CD4-positive, alpha-beta memory T cell (primary cell): ENCODE measurements at regions of chr11 and their contacts with region 1.

Region 1: GRCh38 chr11:93741094-93741881 is at the starts of genes C11orf54 and TAF1D:
- DNase-seq: peak; percentile 96 to 98 (median 97)
- H3K4me3 ChIP-seq: peak within 1 kb of the TSS; percentile 85 to 98
- H3K4me3 Mint-ChIP-seq: peak within 1 kb of the TSS; percentile 98 to 100 (median 100)
- H3K27ac ChIP-seq: peak within 1 kb of the TSS; percentile 93
- H3K27ac Mint-ChIP-seq: peak within 1 kb of the TSS; percentile 98 to 100 (median 99)
- H3K4me1 ChIP-seq: peaks cover 51% of the 10 kb centered on the region
- H3K4me1 Mint-ChIP-seq: peaks cover 41 to 77% (median 57%) of the 10 kb centered on the region in 4 donors
- H3K27me3 ChIP-seq: no peaks in the 10 kb centered on the region
- H3K27me3 Mint-ChIP-seq: no peaks in the 10 kb centered on the region
- total RNA-seq, gene C11orf54: 31.2 to 36.4 TPM
- total RNA-seq, gene TAF1D: 198 to 199 TPM

Region 2: GRCh38 chr11:93543292-93543977 is 197.9 kb before region 1 on chr11 and contains the start of gene SMCO4:
- CTCF ChIA-PET with region 1: no interaction called
- POLR2A ChIA-PET with region 1: no interaction called
- intact Hi-C with region 1: loop called (anchors 5 kb)
- DNase-seq: peak; percentile 58 to 70 (median 59)
- H3K4me3 ChIP-seq: peak within 1 kb of the TSS; percentile 39 to 54
- H3K4me3 Mint-ChIP-seq: peak within 1 kb of the TSS; percentile 88 to 96 (median 92)
- H3K27ac ChIP-seq: peak within 1 kb of the TSS; percentile 41
- H3K27ac Mint-ChIP-seq: peak within 1 kb of the TSS; percentile 79 to 93 (median 88)
- H3K4me1 ChIP-seq: peaks cover 13% of the 10 kb centered on the region
- H3K4me1 Mint-ChIP-seq: peaks cover 21 to 37% (median 29%) of the 10 kb centered on the region in 4 donors
- H3K27me3 ChIP-seq: no peaks in the 10 kb centered on the region
- H3K27me3 Mint-ChIP-seq: peaks cover 0 to 3% of the 10 kb centered on the region in 2 donors
- total RNA-seq, gene SMCO4: 14.5 to 14.7 TPM

Region 3: DNA sequence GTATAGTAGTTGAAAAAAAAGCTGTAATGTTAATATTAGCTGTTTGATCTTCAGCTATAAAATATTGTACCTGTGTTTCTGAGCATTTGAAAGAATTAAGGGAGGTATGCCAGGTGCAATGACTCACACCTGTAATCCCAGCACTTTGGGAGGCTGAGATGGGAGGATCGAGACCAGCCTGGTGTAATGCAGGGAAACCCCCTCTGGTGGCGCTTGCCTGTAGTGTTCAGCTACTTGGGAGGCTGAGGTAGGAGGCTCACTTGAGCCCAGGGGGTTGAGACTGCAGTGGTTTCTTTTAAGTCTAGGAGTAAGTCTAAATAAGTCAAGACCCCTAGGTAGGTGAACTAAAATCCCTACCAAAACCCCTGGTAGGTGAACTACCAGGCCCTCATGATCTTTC is 37.1 kb before region 1 on chr11:
- CTCF ChIA-PET with region 1: no interaction called
- POLR2A ChIA-PET with region 1: no interaction called
- intact Hi-C with region 1: no loop called
- DNase-seq: no peak
- H3K4me3 ChIP-seq: no peak overlapping the region
- H3K4me3 Mint-ChIP-seq: no peak overlapping the region
- H3K27ac ChIP-seq: no peak overlapping the region
- H3K27ac Mint-ChIP-seq: peak overlapping the region in 1 of 7 donors; percentile 20
- H3K4me1 ChIP-seq: no peaks in the 10 kb centered on the region
- H3K4me1 Mint-ChIP-seq: peaks cover 0 to 7% (median 1%) of the 10 kb centered on the region in 4 donors
- H3K27me3 ChIP-seq: no peaks in the 10 kb centered on the region
- H3K27me3 Mint-ChIP-seq: no peaks in the 10 kb centered on the region

Region 4: GRCh38 chr11:93718057-93718563 is 23.2 kb before region 1 on chr11:
- CTCF ChIA-PET with region 1: interaction called, 5 read pairs
- POLR2A ChIA-PET with region 1: interaction called, 115 read pairs
- intact Hi-C with region 1: no loop called
- DNase-seq: peak in 3 of 5 donors; percentile 6 to 20 (median 13)
- H3K4me3 ChIP-seq: no peak overlapping the region
- H3K4me3 Mint-ChIP-seq: peak overlapping the region in 6 of 8 donors; percentile 39 to 73 (median 58)
- H3K27ac ChIP-seq: peak overlapping the region; percentile 3
- H3K27ac Mint-ChIP-seq: peak overlapping the region; percentile 22 to 90 (median 77)
- H3K4me1 ChIP-seq: peaks cover 21% of the 10 kb centered on the region
- H3K4me1 Mint-ChIP-seq: peaks cover 15 to 28% (median 20%) of the 10 kb centered on the region in 4 donors
- H3K27me3 ChIP-seq: no peaks in the 10 kb centered on the region
- H3K27me3 Mint-ChIP-seq: no peaks in the 10 kb centered on the region

Region 5: DNA sequence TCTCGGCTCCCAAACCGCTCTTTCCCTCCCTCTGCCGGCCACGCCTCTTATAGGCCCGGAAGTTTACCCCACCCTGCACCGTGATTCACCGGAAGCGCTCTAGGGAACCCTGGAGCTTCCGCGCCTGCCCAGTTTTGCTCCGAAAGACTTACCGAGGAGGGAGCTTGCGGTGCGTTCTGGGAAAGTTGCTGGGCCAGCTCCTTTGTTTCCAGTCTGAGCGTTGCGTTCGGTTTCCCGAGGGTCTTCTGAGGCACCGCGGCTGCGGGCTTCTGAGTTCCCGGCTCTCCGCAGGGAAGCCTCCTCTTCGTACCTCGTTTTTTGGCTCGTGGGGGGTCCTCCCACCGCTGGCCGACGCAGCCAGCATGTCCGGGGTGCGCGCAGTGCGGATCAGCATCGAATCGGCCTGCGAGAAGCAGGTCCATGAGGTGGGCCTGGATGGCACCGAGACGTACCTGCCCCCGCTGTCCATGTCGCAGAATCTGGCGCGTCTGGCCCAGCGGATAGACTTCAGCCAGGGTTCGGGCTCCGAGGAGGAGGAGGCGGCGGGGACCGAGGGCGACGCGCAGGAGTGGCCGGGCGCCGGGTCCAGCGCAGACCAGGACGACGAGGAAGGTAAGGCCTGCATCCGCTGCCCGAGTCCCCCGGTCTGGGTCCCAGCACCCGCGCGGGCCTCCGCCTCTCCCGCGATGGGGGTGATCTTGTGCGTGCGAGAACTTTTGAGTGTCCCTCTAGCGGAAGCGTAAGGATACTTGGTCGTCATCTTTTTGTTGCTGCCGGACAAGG is 43.1 kb after region 1 on chr11 and contains the start of gene MED17:
- CTCF ChIA-PET with region 1: interaction called, 60 read pairs
- POLR2A ChIA-PET with region 1: interaction called, 180 read pairs
- intact Hi-C with region 1: loop called (anchors 1 kb)
- DNase-seq: peak; percentile 84 to 91 (median 85)
- H3K4me3 ChIP-seq: peak within 1 kb of the TSS; percentile 93 to 94
- H3K4me3 Mint-ChIP-seq: peak within 1 kb of the TSS; percentile 93 to 100 (median 98)
- H3K27ac ChIP-seq: peak within 1 kb of the TSS; percentile 84
- H3K27ac Mint-ChIP-seq: peak within 1 kb of the TSS; percentile 68 to 99 (median 97)
- H3K4me1 ChIP-seq: peaks cover 37% of the 10 kb centered on the region
- H3K4me1 Mint-ChIP-seq: peaks cover 27 to 45% (median 36%) of the 10 kb centered on the region in 4 donors
- H3K27me3 ChIP-seq: no peaks in the 10 kb centered on the region
- H3K27me3 Mint-ChIP-seq: no peaks in the 10 kb centered on the region
- total RNA-seq, gene MED17: 73.2 to 78.5 TPM

Region 6: GRCh38 chr11:93804879-93805278 is 63.6 kb after region 1 on chr11:
- CTCF ChIA-PET with region 1: no interaction called
- POLR2A ChIA-PET with region 1: no interaction called
- intact Hi-C with region 1: no loop called
- DNase-seq: no peak
- H3K4me3 ChIP-seq: no peak overlapping the region
- H3K4me3 Mint-ChIP-seq: no peak overlapping the region
- H3K27ac ChIP-seq: no peak overlapping the region
- H3K27ac Mint-ChIP-seq: peak overlapping the region in 2 of 7 donors; percentile 22 to 43
- H3K4me1 ChIP-seq: no peaks in the 10 kb centered on the region
- H3K4me1 Mint-ChIP-seq: peaks cover 0 to 6% (median under 1%) of the 10 kb centered on the region in 4 donors
- H3K27me3 ChIP-seq: no peaks in the 10 kb centered on the region
- H3K27me3 Mint-ChIP-seq: no peaks in the 10 kb centered on the region

Region 7: DNA sequence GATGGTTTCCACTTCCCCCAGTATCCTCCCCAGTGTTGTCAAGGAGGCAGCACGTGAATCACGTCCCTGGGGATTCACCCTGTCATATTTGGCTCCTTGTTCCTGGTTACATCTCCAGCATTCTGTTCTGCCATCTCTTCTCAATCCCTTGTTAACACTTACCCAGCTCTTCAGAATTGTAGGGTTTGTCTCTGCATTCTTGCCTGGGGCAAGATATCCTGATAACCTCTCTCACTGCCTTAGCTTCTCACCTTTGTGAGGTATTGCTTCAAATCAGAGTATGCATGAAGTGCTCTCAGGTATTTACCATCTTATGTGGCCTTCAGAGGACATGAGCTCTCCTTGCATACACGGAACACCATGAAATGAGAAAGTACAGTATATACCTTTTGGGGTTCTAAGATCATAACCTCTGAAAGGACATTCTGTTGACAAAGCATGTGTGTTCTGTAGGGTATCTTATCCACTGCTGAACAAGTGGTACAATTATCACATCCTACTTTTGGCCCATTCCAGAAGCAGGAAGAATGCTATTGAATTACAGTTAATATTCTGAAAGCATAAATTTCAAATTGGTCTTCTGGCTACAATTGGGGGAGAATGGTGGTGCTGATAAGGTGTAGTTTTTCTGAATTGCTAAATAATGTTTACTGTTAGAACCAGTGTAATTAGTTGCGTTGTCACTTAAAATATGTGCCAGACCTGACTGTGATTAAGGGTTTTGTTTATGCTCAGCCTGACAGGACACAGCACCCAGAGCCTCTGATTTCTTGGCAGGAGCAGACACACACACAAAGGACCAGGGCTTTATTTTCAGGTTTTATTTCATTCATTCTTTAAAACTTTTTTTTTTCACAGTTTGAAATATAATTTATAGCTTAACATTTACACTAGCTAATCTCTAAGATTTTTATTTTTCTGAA is 76.4 kb after region 1 on chr11:
- CTCF ChIA-PET with region 1: no interaction called
- POLR2A ChIA-PET with region 1: no interaction called
- intact Hi-C with region 1: no loop called
- DNase-seq: no peak
- H3K4me3 ChIP-seq: no peak overlapping the region
- H3K4me3 Mint-ChIP-seq: no peak overlapping the region
- H3K27ac ChIP-seq: no peak overlapping the region
- H3K27ac Mint-ChIP-seq: peak overlapping the region in 4 of 7 donors; percentile 1 to 70 (median 18)
- H3K4me1 ChIP-seq: no peaks in the 10 kb centered on the region
- H3K4me1 Mint-ChIP-seq: no peaks in the 10 kb centered on the region
- H3K27me3 ChIP-seq: no peaks in the 10 kb centered on the region
- H3K27me3 Mint-ChIP-seq: no peaks in the 10 kb centered on the region

Region 8: GRCh38 chr11:94128746-94129511 is 387.6 kb after region 1 on chr11 and contains the start of gene PANX1:
- CTCF ChIA-PET with region 1: no interaction called
- POLR2A ChIA-PET with region 1: interaction called, 11 read pairs
- intact Hi-C with region 1: no loop called
- DNase-seq: peak; percentile 72 to 81 (median 78)
- H3K4me3 ChIP-seq: peak within 1 kb of the TSS; percentile 89 to 96
- H3K4me3 Mint-ChIP-seq: peak within 1 kb of the TSS in 4 of 8 donors; percentile 90 to 94 (median 92)
- H3K27ac ChIP-seq: peak within 1 kb of the TSS; percentile 84
- H3K27ac Mint-ChIP-seq: peak within 1 kb of the TSS; percentile 87 to 98 (median 94)
- H3K4me1 ChIP-seq: peaks cover 52% of the 10 kb centered on the region
- H3K4me1 Mint-ChIP-seq: peaks cover 21 to 31% (median 26%) of the 10 kb centered on the region in 4 donors
- H3K27me3 ChIP-seq: no peaks in the 10 kb centered on the region
- H3K27me3 Mint-ChIP-seq: no peaks in the 10 kb centered on the region
- total RNA-seq, gene PANX1: 7.6 to 8.3 TPM